AG04450 (cell line): ENCODE measurements at regions of chr15 and their contacts with region 1.

Region 1: GRCh38 chr15:31488426-31489204 is 162.0 kb downstream of the KLF13 start:
- DNase-seq: peak; percentile 81
- H3K4me3 ChIP-seq: no peak overlapping the region
- H3K27ac ChIP-seq: no peak overlapping the region
- H3K27me3 ChIP-seq: peaks cover 8% of the 10 kb centered on the region
- CTCF ChIP-seq: peak; percentile 97

Region 2: GRCh38 chr15:31128919-31129768 is 359.5 kb before region 1 on chr15:
- CTCF ChIA-PET with region 1: interaction called, 12 read pairs
- POLR2A ChIA-PET with region 1: no interaction called
- DNase-seq: peak; percentile 20
- H3K4me3 ChIP-seq: no peak overlapping the region
- H3K27ac ChIP-seq: no peak overlapping the region
- H3K27me3 ChIP-seq: peaks cover 5% of the 10 kb centered on the region
- CTCF ChIP-seq: peak; percentile 99

Region 3: DNA sequence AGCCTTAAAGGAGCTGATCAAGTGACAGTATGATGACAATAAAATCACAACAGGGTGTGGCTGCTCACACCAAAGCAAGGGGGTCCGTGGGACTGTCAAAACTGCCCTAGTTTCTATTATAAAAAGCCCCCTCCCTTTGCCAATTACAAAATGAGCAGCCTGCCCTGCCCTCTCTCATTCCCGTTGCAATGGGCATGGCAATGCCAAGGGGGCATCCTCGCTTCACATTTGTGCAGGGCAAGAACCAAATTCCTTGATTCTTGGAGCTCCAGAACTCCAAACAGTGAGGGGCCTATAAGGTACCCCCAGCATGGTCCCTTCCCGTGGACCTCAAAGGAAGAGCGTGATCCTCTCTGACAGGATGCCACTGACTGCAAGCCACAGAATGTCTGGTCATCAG is 282.2 kb before region 1 on chr15:
- CTCF ChIA-PET with region 1: interaction called, 60 read pairs
- POLR2A ChIA-PET with region 1: no interaction called
- DNase-seq: no peak
- H3K4me3 ChIP-seq: no peak overlapping the region
- H3K27ac ChIP-seq: no peak overlapping the region
- H3K27me3 ChIP-seq: peaks cover 16% of the 10 kb centered on the region
- CTCF ChIP-seq: no peak

Region 4: DNA sequence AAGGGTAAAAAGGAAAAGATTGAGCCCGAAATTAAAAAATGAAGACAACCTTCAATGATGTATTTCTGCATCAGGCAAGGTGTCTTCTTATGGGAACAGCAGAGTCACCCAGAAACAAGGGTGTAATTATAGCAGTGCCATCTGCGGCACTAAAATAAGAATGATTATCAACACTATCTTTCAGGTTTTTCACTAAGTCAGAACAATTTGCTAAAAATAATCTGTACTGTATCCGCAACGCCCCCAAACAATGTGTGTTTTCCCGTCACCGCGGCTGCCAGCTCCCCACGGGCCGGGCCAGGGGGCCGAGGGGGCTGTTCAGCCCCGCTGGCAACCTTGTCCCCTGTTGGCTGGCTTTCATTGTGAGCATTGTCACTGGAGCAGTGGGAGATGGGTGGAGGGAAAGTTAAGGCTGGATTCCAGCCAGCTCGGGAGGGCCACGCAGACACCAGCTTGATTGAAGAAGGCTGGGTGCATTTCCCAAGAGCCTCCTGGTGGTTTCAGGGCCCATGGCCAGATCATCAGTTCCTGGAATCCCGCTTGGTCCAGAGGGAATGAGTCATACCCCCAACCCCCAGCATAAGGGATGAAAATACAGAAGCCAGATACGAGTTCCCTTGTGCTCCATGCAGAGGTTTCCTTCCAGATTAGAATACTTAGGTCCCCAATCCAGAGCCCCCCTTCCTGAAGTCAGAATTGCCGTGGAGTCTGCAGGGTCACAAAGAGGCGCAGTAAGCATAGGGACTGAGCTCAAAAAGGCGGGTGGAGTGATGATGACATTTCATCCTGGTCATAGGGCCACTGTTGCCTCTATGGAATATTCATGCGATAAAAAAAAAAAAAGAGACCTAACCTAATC is 252.2 kb before region 1 on chr15:
- CTCF ChIA-PET with region 1: interaction called, 14 read pairs
- POLR2A ChIA-PET with region 1: no interaction called
- DNase-seq: peak; percentile 90
- H3K4me3 ChIP-seq: 0 out of 2 replicates have a peak overlapping the region, but pooled peaks have one; percentile 15
- H3K27ac ChIP-seq: peak overlapping the region; percentile 90
- H3K27me3 ChIP-seq: no peaks in the 10 kb centered on the region
- CTCF ChIP-seq: 0 out of 2 replicates have a peak, but pooled peaks have one; percentile 14

Region 5: DNA sequence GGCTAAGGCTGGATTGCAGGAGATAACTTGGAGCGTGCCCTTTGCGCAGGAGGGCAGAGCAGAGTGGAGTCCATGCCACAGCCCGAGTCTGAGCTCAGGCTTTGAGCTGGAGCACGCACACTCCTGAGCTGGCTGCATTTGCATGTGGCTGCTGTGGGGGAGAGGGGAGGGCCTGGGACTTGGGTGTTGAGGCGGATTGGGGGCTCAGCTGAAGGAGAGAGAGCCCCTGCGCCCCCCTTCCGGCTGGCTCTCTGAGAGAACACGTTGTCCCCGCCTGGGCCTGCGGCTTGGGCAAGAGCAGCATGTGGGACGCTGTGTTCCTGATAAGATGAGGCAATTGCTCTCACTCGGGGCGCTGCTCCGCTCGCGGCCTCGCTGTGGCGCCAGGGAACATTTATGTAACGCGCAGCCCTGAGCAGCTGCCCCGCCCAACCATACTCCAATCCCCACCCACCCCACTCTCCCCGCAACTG is 122.9 kb before region 1 on chr15:
- CTCF ChIA-PET with region 1: interaction called, 63 read pairs
- POLR2A ChIA-PET with region 1: interaction called, 3 read pairs
- DNase-seq: peak; percentile 26
- H3K4me3 ChIP-seq: no peak overlapping the region
- H3K27ac ChIP-seq: no peak overlapping the region
- H3K27me3 ChIP-seq: no peaks in the 10 kb centered on the region
- CTCF ChIP-seq: peak; percentile 44

Region 6: DNA sequence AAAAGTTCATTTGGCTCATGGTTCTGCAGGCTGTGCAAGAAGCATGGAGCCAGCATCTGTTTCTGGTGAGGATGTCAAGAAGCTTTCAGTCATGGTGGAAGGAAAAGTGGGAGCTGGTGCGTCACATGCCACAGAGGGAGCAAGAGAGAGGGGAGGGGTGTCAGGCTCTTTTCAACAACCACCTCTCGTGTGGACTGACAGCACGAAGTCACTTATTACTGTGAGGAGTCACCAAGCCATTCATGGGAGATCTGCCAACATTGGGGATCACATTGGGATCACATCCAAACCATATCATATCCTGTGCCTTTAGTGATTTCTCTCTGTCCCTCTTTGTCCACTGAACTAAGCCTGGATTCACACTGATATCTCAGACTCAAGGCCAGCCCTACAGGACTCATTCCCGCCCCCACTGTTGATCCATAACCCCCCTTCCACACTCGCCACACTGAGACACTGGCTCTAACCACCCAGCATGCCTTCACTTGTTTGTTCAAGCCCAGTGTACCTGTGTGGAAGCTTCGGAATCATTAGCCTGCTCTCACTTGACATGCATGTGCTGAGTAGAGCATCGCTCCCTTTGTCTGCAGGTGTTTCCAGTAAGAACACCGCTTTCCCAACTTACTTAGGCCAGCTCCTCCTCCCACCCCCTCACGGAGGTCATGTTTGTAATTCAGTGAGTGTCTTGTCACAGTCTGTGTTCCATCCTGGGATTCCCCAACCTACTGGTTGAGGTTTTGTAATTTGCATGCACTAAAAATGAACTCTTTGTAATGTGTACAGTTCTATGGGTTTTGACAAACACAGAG is 29.8 kb before region 1 on chr15:
- CTCF ChIA-PET with region 1: interaction called, 18 read pairs
- POLR2A ChIA-PET with region 1: no interaction called
- DNase-seq: no peak
- H3K4me3 ChIP-seq: no peak overlapping the region
- H3K27ac ChIP-seq: no peak overlapping the region
- H3K27me3 ChIP-seq: no peaks in the 10 kb centered on the region
- CTCF ChIP-seq: no peak